Dorsolateral prefrontal cortex (tissue), 120 donors: ENCODE measurements at regions of chr17 and their contacts with region 1.

Region 1: GRCh38 chr17:21511363-21512198 is 135.4 kb downstream of the KCNJ12 start:
- DNase-seq: peak; percentile 69 to 89 (median 82)
- H3K4me3 ChIP-seq: peak overlapping the region; percentile 36 to 88 (median 67)
- H3K27ac ChIP-seq: peak overlapping the region in 34 of 59 donors; percentile 15 to 86 (median 50)
- H3K27me3 ChIP-seq: no peaks in the 10 kb centered on the region
- CTCF ChIP-seq: peak; percentile 46 to 97 (median 85)

Region 2: GRCh38 chr17:21126645-21127510 is 384.7 kb before region 1 on chr17 and contains the start of gene DHRS7B:
- intact Hi-C with region 1: loop called (anchors 5 to 10 kb)
- DNase-seq: peak; percentile 92 to 98 (median 96)
- H3K4me3 ChIP-seq: peak within 1 kb of the TSS; percentile 64 to 100 (median 90)
- H3K27ac ChIP-seq: peak within 1 kb of the TSS in 58 of 59 donors; percentile 15 to 94 (median 74)
- H3K27me3 ChIP-seq: no peaks in the 10 kb centered on the region
- CTCF ChIP-seq: peak in 21 of 56 donors; percentile 10 to 48 (median 21)
- total RNA-seq, gene DHRS7B: 13.4 to 31.5 (median 21.3) TPM

Region 3: GRCh38 chr17:21284319-21285163 is 227.0 kb before region 1 on chr17 and contains the start of gene MAP2K3:
- intact Hi-C with region 1: loop called (anchors 2 to 10 kb)
- DNase-seq: peak; percentile 97 to 100 (median 100)
- H3K4me3 ChIP-seq: peak within 1 kb of the TSS; percentile 55 to 99 (median 91)
- H3K27ac ChIP-seq: peak within 1 kb of the TSS in 57 of 59 donors; percentile 11 to 94 (median 83)
- H3K27me3 ChIP-seq: no peaks in the 10 kb centered on the region
- CTCF ChIP-seq: peak in 16 of 56 donors; percentile 7 to 45 (median 30)
- total RNA-seq, gene MAP2K3: 9.6 to 38.2 (median 18.5) TPM

Region 4: DNA sequence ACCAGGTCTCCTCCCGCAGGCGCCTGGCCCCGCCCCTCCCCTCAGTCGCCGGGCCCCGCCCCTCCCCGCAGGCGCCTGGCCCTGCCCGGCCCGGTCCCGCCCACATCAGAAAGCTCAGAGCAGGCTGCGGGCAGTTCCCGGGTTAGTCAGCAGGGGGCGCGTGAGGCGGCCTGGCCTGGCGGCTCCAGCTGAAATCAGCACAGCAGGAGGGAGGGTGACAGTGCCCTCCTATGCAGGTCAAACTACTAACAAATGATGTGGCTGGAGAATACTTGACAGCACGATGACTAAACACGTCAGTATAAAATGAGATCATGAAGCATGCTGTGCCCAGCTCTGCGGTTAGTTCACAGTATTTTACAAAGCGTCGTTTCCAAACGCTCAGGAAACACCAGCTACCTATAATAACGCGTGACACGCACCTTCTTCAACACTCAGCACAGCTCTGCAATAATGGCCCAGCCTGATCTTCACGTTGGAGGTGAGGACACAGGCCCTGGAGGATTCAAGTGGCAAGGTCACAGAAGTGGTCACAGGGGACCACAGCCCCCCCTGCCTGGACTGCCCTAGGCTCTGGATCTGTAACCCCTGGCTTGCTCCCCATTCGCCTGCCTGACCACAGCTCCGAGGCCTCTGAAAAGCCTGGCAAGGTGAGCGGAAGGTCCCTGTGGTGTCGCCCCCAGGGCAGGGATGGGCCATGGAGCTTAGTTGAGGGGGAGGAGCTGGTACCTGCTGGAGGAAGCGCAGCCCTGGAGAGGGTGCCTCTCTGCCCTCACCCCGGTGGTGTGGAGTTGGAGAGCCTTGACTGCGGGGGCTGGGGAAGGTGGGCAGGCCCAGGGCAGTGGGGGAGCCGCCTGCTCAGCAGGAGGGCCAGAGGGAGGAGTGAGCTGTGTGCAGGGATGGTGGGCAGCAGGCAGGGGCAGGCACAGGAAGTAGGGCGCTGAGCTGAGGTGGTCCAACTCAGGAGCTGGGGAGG is 54.2 kb before region 1 on chr17:
- intact Hi-C with region 1: loop called in 1 of 2 experiments (anchors 1 kb)
- DNase-seq: peak; percentile 71 to 88 (median 80)
- H3K4me3 ChIP-seq: peak overlapping the region in 5 of 59 donors; percentile 1 to 12 (median 6)
- H3K27ac ChIP-seq: no peak overlapping the region
- H3K27me3 ChIP-seq: no peaks in the 10 kb centered on the region
- CTCF ChIP-seq: peak; percentile 67 to 97 (median 90)